ENCODE measurements at regions of chr19 and their contacts with region 1.

Region 1: GRCh38 chr19:23075031-23075760 is 41.6 kb upstream of the ZNF730 start:
- DNase-seq: peak; percentile 90
- H3K4me3 ChIP-seq: peak overlapping the region; percentile 97
- H3K27ac ChIP-seq: peak overlapping the region; percentile 70
- H3K4me1 ChIP-seq: peaks cover 14% of the 10 kb centered on the region
- CTCF ChIP-seq: no peak

Region 2: GRCh38 chr19:23116802-23117571 is 41.8 kb after region 1 on chr19 and contains the start of gene ZNF730:
- CTCF ChIA-PET with region 1: no interaction called
- POLR2A ChIA-PET with region 1: interaction called, 17 read pairs
- intact Hi-C with region 1: loop called (anchors 2 kb)
- DNase-seq: peak; percentile 88
- H3K4me3 ChIP-seq: peak within 1 kb of the TSS; percentile 93
- H3K27ac ChIP-seq: peak within 1 kb of the TSS; percentile 81
- H3K4me1 ChIP-seq: peaks cover 15% of the 10 kb centered on the region
- CTCF ChIP-seq: no peak
- total RNA-seq, gene ZNF730: 19.6 and 36.2 TPM in 2 replicates

Region 3: DNA sequence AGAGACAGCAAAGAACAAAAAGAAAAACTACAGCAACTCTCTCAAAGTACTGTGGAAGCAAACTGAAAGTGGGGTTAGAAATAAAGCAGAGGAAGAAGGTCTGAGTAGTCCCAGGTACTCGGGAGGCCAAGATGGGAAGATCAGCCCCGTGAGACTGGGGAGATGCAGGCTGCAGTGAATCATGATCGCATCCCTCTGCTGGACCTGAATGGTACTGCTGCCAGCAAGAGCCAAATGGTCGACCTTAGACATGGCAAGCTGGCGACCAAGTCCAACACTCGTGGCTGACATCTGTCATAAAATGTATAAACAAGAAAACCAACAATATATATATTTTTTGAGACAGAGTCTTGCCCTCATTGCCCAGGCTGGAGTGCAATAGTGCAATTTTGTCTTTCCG is 208.7 kb after region 1 on chr19:
- CTCF ChIA-PET with region 1: no interaction called
- POLR2A ChIA-PET with region 1: interaction called, 5 read pairs
- intact Hi-C with region 1: loop called (anchors 10 kb)
- DNase-seq: peak; percentile 82
- H3K4me3 ChIP-seq: no peak overlapping the region
- H3K27ac ChIP-seq: peak overlapping the region; percentile 16
- H3K4me1 ChIP-seq: peaks cover 18% of the 10 kb centered on the region
- CTCF ChIP-seq: peak; percentile 69

Measured in OCI-LY7 (cell line).